ENCODE measurements at regions of chr17 and their contacts with region 1.

Region 1: GRCh38 chr17:76397687-76398487 is 13.5 kb downstream of the SPHK1 start:
- DNase-seq: peak; percentile 69 to 90 (median 76)
- H3K4me3 ChIP-seq: no peak overlapping the region
- H3K4me3 Mint-ChIP-seq: no peak overlapping the region
- H3K27ac ChIP-seq: no peak overlapping the region
- H3K27ac Mint-ChIP-seq: peak overlapping the region in 6 of 8 donors; percentile 1 to 57 (median 44)
- H3K4me1 ChIP-seq: no peaks in the 10 kb centered on the region
- H3K4me1 Mint-ChIP-seq: no peaks in the 10 kb centered on the region
- H3K27me3 ChIP-seq: no peaks in the 10 kb centered on the region
- H3K27me3 Mint-ChIP-seq: no peaks in the 10 kb centered on the region

Region 2: DNA sequence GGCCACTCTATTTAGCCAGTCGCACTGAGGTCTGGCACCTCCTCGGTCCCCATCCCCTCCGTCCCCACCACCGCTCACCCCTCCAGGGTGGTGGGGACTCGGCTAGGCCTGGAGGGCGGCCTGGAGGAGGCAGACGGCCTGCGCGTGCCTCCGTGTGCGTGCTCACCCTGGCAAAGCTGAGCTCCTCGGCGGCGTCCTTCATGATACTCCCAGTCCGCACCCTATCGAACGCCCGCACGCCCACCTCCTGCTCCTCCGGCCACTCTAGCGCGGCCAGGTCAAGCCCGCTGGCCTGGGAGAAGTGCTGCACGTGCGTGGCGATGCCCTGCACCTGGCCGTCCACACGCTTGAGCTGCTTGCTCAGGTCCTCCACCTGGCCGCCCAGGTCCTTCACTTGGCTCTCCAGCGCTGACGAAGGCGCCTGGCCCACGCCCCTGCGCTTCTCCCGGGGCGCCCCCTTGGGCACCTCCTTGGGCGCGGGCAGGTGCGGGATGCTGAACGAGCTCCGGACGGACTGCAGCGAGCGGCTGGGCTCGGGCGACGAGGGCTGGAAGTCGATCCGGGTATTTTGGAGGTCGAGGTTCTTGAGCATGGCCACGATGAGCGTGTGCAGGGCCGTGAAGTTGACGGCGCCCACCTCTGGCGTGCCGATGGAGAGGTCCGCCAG is 90.5 kb before region 1 on chr17:
- CTCF ChIA-PET with region 1: interaction called, 175 read pairs
- POLR2A ChIA-PET with region 1: interaction called, 6 read pairs
- DNase-seq: no peak
- H3K4me3 ChIP-seq: no peak overlapping the region
- H3K4me3 Mint-ChIP-seq: no peak overlapping the region
- H3K27ac ChIP-seq: no peak overlapping the region
- H3K27ac Mint-ChIP-seq: no peak overlapping the region
- H3K4me1 ChIP-seq: no peaks in the 10 kb centered on the region
- H3K4me1 Mint-ChIP-seq: peaks cover 0 to 4% (median 2%) of the 10 kb centered on the region in 3 donors
- H3K27me3 ChIP-seq: no peaks in the 10 kb centered on the region
- H3K27me3 Mint-ChIP-seq: peaks cover 0 to 1% of the 10 kb centered on the region in 2 donors

Region 3: GRCh38 chr17:76353599-76354316 is 44.1 kb before region 1 on chr17 and contains the start of gene PRPSAP1:
- CTCF ChIA-PET with region 1: interaction called, 21 read pairs
- POLR2A ChIA-PET with region 1: interaction called, 3 read pairs
- DNase-seq: peak; percentile 59 to 86 (median 82)
- H3K4me3 ChIP-seq: peak within 1 kb of the TSS; percentile 87
- H3K4me3 Mint-ChIP-seq: peak within 1 kb of the TSS; percentile 90 to 100 (median 96)
- H3K27ac ChIP-seq: peak within 1 kb of the TSS; percentile 77
- H3K27ac Mint-ChIP-seq: peak within 1 kb of the TSS; percentile 77 to 100 (median 98)
- H3K4me1 ChIP-seq: peaks cover 9% of the 10 kb centered on the region
- H3K4me1 Mint-ChIP-seq: peaks cover 18 to 29% (median 24%) of the 10 kb centered on the region in 3 donors
- H3K27me3 ChIP-seq: no peaks in the 10 kb centered on the region
- H3K27me3 Mint-ChIP-seq: peaks cover 0 to 4% of the 10 kb centered on the region in 2 donors
- total RNA-seq, gene PRPSAP1: 46.9 to 48.3 TPM

Region 4: DNA sequence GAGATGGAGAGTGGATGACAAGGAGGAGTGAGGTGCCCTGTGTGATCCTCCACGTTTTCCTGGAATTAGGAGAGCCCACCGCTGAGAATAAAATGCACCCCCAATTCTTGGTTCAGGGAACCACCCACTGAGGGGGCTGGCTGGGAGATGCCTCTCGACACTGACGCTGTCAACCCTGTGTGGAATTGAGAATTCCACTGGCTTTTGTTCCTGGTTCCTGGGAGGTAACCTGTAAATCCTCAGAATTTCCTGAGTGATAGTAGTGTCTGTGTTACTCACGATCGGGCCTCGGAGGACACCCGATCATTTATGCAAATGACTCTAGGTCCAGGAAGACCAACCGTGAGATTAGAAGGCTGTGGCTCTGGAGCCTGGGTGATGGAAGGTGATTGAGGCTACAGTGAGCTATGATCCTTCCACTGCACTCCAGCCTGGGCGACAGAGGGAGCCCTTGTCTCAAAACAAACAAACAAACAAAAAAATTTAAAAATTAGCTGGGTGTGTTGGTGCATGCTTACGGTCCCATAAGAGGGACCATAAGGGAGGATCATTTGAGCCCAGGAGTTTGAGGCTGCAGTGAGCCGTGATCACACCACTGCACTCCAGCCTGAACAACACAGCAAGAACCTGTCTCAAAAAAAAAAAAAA is 32.5 kb before region 1 on chr17:
- CTCF ChIA-PET with region 1: interaction called, 23 read pairs
- POLR2A ChIA-PET with region 1: no interaction called
- DNase-seq: no peak
- H3K4me3 ChIP-seq: no peak overlapping the region
- H3K4me3 Mint-ChIP-seq: no peak overlapping the region
- H3K27ac ChIP-seq: no peak overlapping the region
- H3K27ac Mint-ChIP-seq: no peak overlapping the region
- H3K4me1 ChIP-seq: no peaks in the 10 kb centered on the region
- H3K4me1 Mint-ChIP-seq: no peaks in the 10 kb centered on the region
- H3K27me3 ChIP-seq: no peaks in the 10 kb centered on the region
- H3K27me3 Mint-ChIP-seq: peaks cover 0 to 3% of the 10 kb centered on the region in 2 donors

Region 5: DNA sequence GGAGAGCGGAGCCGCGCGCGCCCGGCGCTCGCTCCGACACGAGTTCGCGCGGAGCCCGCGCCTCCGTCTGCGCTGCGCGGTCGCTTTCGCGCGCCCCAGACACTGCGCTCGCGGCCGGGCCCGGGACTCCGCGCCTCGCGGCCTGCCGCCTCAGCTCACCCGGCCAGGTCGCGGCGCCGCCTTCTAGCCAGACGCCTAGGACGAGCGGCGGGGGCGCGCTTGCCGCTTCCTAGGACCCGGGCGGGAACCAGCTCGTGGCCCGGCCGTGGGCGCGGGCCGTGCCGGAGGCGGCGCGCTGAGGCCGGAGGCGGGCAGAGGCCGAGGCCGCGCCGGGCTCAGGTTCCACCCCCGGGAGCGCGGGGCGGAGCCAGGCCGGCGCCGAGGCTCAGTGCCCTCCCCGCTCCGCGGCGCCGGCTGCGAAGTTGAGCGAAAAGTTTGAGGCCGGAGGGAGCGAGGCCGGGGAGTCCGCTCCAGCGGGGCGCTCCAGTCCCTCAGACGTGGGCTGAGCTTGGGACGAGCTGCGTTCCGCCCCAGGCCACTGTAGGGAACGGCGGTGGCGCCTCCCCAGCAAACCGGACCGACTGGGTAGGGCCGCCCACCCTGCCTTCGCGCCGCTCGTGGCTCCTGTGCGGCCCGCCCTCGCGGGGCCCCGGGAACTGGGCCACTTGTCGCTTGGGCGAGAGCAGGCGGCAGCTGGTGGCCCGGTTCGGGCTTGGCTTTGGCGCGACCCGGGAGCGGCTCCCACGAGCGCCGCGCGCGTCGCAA is 13.5 kb before region 1 on chr17 and contains the start of gene SPHK1:
- CTCF ChIA-PET with region 1: interaction called, 110 read pairs
- POLR2A ChIA-PET with region 1: no interaction called
- DNase-seq: peak; percentile 37 to 63 (median 48)
- H3K4me3 ChIP-seq: peak within 1 kb of the TSS; percentile 59
- H3K4me3 Mint-ChIP-seq: peak within 1 kb of the TSS; percentile 81 to 96 (median 90)
- H3K27ac ChIP-seq: peak within 1 kb of the TSS; percentile 45
- H3K27ac Mint-ChIP-seq: peak within 1 kb of the TSS; percentile 44 to 91 (median 70)
- H3K4me1 ChIP-seq: peaks cover 19% of the 10 kb centered on the region
- H3K4me1 Mint-ChIP-seq: peaks cover 3 to 22% (median 6%) of the 10 kb centered on the region in 3 donors
- H3K27me3 ChIP-seq: no peaks in the 10 kb centered on the region
- H3K27me3 Mint-ChIP-seq: no peaks in the 10 kb centered on the region
- total RNA-seq, gene SPHK1: 17.2 to 18.7 TPM

Region 6: GRCh38 chr17:76408052-76408849 is 10.4 kb after region 1 on chr17:
- CTCF ChIA-PET with region 1: interaction called, 52 read pairs
- POLR2A ChIA-PET with region 1: no interaction called
- DNase-seq: peak; percentile 40 to 77 (median 55)
- H3K4me3 ChIP-seq: no peak overlapping the region
- H3K4me3 Mint-ChIP-seq: no peak overlapping the region
- H3K27ac ChIP-seq: no peak overlapping the region
- H3K27ac Mint-ChIP-seq: peak overlapping the region in 6 of 8 donors; percentile 10 to 82 (median 40)
- H3K4me1 ChIP-seq: no peaks in the 10 kb centered on the region
- H3K4me1 Mint-ChIP-seq: peaks cover 7 to 11% (median 9%) of the 10 kb centered on the region in 3 donors
- H3K27me3 ChIP-seq: no peaks in the 10 kb centered on the region
- H3K27me3 Mint-ChIP-seq: no peaks in the 10 kb centered on the region

Region 7: DNA sequence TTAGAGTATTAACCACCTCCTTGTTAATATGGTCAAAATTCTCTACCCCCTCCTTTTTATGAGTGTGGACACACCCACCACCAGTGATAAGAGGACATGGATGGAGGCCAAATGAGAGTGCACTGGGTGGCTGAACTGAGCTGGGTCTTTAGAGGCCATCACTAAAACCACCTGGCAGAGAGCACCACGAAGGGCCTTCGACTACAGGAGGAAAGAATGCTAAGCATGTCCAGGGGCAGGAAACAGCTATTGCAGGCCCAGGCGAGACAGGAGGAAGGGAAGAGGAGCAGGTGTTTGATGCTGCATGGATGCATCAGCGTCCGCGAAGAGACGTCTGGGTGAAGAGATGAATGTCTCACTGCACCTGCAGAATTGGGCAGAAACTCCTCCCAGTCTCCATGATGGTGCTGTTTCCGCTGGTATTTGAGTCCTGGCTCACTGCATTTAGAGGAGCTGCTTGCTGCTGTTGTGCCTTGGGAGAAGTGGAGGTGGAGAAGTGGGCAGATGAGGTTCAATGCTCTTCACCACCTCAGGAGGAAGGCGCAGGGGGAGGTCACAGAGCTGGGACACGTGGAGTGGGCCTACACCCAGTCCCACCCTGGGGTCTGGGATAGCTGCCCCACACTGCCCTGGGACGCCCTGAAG is 19.7 kb after region 1 on chr17:
- CTCF ChIA-PET with region 1: interaction called, 52 read pairs
- POLR2A ChIA-PET with region 1: no interaction called
- DNase-seq: no peak
- H3K4me3 ChIP-seq: no peak overlapping the region
- H3K4me3 Mint-ChIP-seq: no peak overlapping the region
- H3K27ac ChIP-seq: no peak overlapping the region
- H3K27ac Mint-ChIP-seq: peak overlapping the region in 5 of 8 donors; percentile 7 to 73 (median 44)
- H3K4me1 ChIP-seq: no peaks in the 10 kb centered on the region
- H3K4me1 Mint-ChIP-seq: peaks cover 12 to 33% (median 33%) of the 10 kb centered on the region in 3 donors
- H3K27me3 ChIP-seq: no peaks in the 10 kb centered on the region
- H3K27me3 Mint-ChIP-seq: no peaks in the 10 kb centered on the region